WTC11 (cell line): ENCODE measurements at regions of chr3 and their contacts with region 1.

Region 1: DNA sequence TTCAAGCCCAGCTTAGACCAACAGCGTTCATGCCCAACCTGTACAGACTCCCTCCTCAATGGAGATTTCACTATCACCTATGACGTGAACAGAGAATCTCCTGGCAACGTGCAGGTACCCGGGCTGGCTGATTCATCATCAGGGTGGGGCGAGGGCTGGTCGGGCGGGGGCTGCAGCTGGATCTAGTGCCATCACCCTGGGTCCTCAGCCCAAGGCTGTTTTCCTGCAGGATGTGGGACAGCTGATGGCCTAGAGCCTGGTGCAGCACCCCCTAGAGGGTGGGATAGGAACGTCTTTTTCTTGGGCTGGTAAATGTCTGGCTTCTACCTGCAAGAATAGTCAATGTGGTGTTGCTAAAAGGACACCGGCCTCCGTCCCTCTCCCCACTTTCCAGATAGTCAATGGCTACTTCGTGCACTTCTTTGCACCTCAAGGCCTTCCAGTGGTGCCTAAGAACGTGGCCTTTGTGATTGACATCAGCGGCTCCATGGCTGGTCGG is 4.4 kb downstream of the ITIH3 start:
- DNase-seq: peak; percentile 79
- ATAC-seq: peak; percentile 94
- H3K4me3 Mint-ChIP-seq: no peak overlapping the region
- H3K27ac Mint-ChIP-seq: no peak overlapping the region
- H3K4me1 Mint-ChIP-seq: no peaks in the 10 kb centered on the region
- H3K27me3 Mint-ChIP-seq: no peaks in the 10 kb centered on the region; the same call in 1 of the 2 replicates
- CTCF ChIP-seq: peak; percentile 64

Region 2: GRCh38 chr3:52536369-52537164 is 262.5 kb before region 1 on chr3 and contains the start of gene UQCC5:
- CTCF ChIA-PET with region 1: no interaction called
- POLR2A ChIA-PET with region 1: no interaction called
- DNase-seq: peak; percentile 98
- ATAC-seq: peak; percentile 86
- H3K4me3 Mint-ChIP-seq: peak within 1 kb of the TSS; percentile 98
- H3K27ac Mint-ChIP-seq: peak within 1 kb of the TSS; percentile 99
- H3K4me1 Mint-ChIP-seq: peaks cover 51% of the 10 kb centered on the region
- H3K27me3 Mint-ChIP-seq: no peaks in the 10 kb centered on the region
- CTCF ChIP-seq: no peak
- total RNA-seq, gene UQCC5: 30.0 to 37.8 TPM (median 36.4 TPM) in 3 replicates

Region 3: DNA sequence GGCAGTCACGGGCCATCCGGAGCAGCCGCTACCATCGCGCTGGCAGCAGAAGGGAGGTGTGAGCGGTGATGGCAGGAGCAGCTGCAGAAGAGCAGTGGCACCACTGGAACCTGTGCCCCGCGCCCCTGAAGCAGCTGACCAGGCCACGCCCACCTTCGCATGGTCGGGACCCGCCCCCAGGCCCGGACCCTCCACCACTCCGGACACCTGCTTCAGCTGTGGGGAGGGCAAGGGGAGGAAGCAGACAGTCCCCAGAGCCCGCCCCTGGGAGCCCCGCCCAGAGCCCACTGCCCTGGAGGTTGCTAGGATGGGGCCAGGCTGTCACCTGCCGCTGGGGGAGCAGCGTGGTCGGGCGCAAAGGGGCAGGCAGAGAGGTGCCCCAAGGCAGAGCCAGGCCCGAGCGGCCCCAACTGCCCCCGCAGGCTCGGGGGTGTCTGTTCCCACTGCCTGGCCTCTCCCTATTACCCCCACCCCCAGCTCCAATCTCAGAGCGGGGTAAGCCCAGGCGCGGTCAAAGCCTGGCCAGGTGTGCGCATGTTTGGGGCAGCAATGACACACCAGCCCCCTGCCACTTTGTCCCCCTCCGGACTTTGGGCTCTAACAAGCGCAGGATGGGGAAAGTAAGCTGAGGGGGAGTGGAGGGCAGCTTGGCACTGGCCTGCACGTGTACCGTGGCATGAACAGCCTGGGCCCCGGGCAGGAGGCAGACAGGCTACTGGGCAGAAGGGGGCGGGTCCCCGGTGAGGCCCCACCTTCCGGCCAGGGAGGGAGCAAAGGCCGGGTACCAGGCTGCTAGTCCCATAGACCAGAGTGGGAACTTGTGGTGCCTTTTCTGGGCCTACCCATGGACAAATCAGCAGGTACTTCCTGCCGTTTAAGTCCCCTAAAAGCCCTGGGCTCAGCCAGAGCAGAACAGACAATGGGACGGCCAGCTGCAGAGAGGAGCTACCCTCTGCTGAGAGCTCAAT is 84.4 kb before region 1 on chr3:
- CTCF ChIA-PET with region 1: interaction called, 17 read pairs
- POLR2A ChIA-PET with region 1: no interaction called
- DNase-seq: peak; percentile 96
- ATAC-seq: peak; percentile 96
- H3K4me3 Mint-ChIP-seq: peak overlapping the region; percentile 68
- H3K27ac Mint-ChIP-seq: no peak overlapping the region
- H3K4me1 Mint-ChIP-seq: peaks cover 7% of the 10 kb centered on the region
- H3K27me3 Mint-ChIP-seq: no peaks in the 10 kb centered on the region
- CTCF ChIP-seq: no peak

Region 4: GRCh38 chr3:52770496-52771333 is 28.3 kb before region 1 on chr3 and contains the start of gene NEK4:
- CTCF ChIA-PET with region 1: interaction called, 46 read pairs
- POLR2A ChIA-PET with region 1: no interaction called
- DNase-seq: peak; percentile 95
- ATAC-seq: peak; percentile 96
- H3K4me3 Mint-ChIP-seq: peak within 1 kb of the TSS; percentile 90
- H3K27ac Mint-ChIP-seq: peak within 1 kb of the TSS; percentile 95
- H3K4me1 Mint-ChIP-seq: peaks cover 6% of the 10 kb centered on the region
- H3K27me3 Mint-ChIP-seq: no peaks in the 10 kb centered on the region
- CTCF ChIP-seq: no peak
- total RNA-seq, gene NEK4: 30.3 to 31.4 TPM (median 31.2 TPM) in 3 replicates

Region 5: DNA sequence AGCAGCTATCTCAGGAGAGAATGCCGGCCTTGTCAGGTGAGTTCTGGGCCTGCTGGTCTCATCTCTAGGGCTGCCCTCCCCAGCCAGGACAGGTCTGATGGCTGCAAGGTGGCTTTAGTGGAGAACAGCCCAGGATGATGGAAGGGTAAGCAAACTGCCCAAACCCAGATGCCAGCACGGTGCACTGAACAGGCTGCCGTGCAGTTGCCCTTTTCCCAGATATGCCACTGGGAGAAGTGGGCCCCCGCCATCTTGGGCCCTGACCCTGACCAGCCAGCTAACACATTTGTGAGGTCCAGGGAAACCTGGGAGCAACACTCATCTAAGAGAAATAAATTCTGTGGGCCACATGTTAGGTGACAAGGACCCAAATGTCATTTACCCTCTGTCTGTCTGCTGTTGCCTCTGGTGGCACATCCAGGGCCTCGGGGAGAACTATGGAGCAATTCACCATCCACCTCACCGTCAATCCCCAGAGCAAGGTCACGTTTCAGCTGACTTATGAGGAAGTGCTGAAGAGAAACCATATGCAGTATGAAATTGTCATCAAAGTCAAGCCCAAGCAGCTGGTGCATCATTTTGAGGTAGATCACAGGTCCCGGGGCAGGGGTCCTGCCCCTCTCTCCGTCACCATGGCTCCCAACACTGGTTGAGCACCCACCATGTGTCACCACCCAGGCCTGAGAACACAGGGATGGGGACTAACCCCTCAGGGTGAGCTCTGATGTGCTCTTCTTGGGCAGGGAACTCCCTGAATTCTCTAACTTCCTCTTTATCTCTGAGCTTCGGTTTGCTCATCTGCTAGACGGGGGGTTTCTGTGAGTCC is 19.8 kb before region 1 on chr3:
- CTCF ChIA-PET with region 1: interaction called, 26 read pairs
- POLR2A ChIA-PET with region 1: no interaction called
- DNase-seq: peak; percentile 3
- ATAC-seq: no peak
- H3K4me3 Mint-ChIP-seq: no peak overlapping the region
- H3K27ac Mint-ChIP-seq: no peak overlapping the region
- H3K4me1 Mint-ChIP-seq: peaks cover 13% of the 10 kb centered on the region
- H3K27me3 Mint-ChIP-seq: no peaks in the 10 kb centered on the region
- CTCF ChIP-seq: no peak

Region 6: GRCh38 chr3:52787672-52788625 is 11.1 kb before region 1 on chr3:
- CTCF ChIA-PET with region 1: interaction called, 41 read pairs
- POLR2A ChIA-PET with region 1: interaction called, 3 read pairs
- DNase-seq: no peak
- ATAC-seq: no peak
- H3K4me3 Mint-ChIP-seq: no peak overlapping the region
- H3K27ac Mint-ChIP-seq: peak overlapping the region; percentile 9; the same call in 1 of the 2 replicates
- H3K4me1 Mint-ChIP-seq: peaks cover under 1% of the 10 kb centered on the region; the same call in 1 of the 2 replicates
- H3K27me3 Mint-ChIP-seq: no peaks in the 10 kb centered on the region
- CTCF ChIP-seq: no peak

Region 7: DNA sequence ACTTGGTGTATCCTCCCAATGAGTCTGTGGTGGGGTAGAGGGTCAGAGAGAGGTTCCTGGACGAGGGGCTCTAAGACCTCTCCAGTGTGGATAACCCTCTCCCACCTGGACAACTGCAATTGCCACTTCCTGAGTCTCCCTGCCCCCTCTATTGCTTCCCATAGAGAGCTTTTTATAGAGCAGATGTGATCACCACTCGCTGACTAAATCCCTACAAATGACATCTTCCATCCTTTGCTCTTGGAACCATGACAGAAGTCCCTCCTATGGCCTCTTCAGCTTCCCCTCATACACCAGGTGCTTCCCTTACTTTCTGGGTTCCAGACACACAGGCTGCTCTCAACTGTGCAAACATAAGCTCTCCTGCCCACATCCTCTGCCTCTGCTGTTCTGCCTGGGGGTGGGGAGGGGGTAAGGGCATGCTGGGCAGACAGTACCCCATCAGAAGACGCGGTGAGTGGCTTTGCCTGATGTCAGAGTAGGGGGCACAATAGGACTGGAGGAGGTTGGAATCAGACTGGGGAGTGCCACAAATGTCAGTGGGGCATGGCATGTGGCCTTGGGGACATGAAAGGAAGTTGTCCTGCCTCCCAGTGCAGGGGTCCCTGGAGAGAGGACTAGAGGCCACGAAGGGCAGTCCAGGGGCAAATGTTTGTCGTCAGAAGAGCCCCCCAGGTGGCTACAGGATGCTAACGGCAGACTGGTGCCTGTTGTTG is 10.8 kb after region 1 on chr3:
- CTCF ChIA-PET with region 1: interaction called, 14 read pairs
- POLR2A ChIA-PET with region 1: interaction called, 3 read pairs
- DNase-seq: no peak
- ATAC-seq: no peak
- H3K4me3 Mint-ChIP-seq: no peak overlapping the region
- H3K27ac Mint-ChIP-seq: no peak overlapping the region
- H3K4me1 Mint-ChIP-seq: no peaks in the 10 kb centered on the region
- H3K27me3 Mint-ChIP-seq: peaks cover 3% of the 10 kb centered on the region; the same call in 1 of the 2 replicates
- CTCF ChIP-seq: no peak

Region 8: DNA sequence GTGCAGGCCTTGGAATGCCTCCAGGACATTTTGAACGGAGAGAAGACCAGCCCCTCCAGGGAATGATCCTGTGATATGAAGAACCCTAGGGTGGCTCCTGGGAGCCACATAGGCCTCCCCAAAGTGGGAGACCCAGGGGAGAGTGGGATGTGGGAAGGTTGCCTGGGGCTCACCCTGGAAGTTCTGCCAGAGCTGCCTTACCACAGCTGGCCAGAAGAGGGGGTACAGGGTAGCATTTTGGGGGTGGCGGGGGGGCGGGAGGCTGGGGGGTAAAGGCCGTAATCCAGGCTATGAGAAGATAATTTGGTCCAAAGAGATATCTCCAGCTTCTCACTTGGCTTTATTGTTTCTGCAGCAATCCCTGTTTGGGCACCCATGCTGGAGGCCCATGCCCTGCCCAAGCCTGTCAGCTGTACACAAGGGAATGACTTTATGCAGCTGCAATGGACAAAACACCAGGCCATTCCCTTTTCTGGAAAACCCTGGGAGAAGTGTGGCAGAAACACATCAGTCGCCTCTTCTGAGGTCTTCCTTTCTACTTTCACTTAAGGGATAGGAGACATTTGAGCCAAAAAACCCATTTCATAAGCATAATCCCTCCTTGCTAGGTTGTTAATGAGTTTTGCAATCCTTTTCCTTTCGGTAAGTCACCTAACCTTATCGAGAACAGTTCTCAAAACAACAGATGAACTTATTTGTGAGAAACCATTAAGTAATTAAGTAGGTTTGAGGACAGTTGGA is 46.8 kb after region 1 on chr3:
- CTCF ChIA-PET with region 1: interaction called, 10 read pairs
- POLR2A ChIA-PET with region 1: no interaction called
- DNase-seq: peak; percentile 47
- ATAC-seq: peak; percentile 67
- H3K4me3 Mint-ChIP-seq: no peak overlapping the region
- H3K27ac Mint-ChIP-seq: no peak overlapping the region
- H3K4me1 Mint-ChIP-seq: peaks cover 3% of the 10 kb centered on the region; the same call in 1 of the 2 replicates
- H3K27me3 Mint-ChIP-seq: no peaks in the 10 kb centered on the region
- CTCF ChIP-seq: peak; percentile 45

Region 9: GRCh38 chr3:53150247-53151085 is 351.4 kb after region 1 on chr3:
- CTCF ChIA-PET with region 1: no interaction called
- POLR2A ChIA-PET with region 1: no interaction called
- DNase-seq: no peak
- ATAC-seq: no peak
- H3K4me3 Mint-ChIP-seq: no peak overlapping the region
- H3K27ac Mint-ChIP-seq: no peak overlapping the region
- H3K4me1 Mint-ChIP-seq: no peaks in the 10 kb centered on the region
- H3K27me3 Mint-ChIP-seq: no peaks in the 10 kb centered on the region
- CTCF ChIP-seq: no peak